AG04449 (cell line): ENCODE measurements at regions of chr6 and their contacts with region 1.

Region 1: DNA sequence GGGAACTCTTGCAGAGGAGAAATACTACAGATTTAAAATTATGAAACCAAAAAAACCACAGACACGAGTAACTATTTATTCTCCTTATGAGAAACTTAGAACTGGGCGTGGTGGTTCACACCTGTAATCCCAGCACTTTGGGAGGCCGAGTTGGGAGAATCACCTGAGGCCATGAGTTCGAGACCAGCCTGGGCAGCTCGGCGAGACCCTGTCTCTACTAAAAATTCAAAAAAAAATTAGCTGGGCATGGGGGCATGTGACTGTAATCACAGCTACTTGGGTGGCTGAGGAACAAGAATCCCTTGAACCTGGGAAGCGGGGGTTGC is 36.8 kb downstream of the SSR1 start:
- DNase-seq: no peak
- H3K4me3 ChIP-seq: no peak overlapping the region
- CTCF ChIP-seq: no peak

Region 2: DNA sequence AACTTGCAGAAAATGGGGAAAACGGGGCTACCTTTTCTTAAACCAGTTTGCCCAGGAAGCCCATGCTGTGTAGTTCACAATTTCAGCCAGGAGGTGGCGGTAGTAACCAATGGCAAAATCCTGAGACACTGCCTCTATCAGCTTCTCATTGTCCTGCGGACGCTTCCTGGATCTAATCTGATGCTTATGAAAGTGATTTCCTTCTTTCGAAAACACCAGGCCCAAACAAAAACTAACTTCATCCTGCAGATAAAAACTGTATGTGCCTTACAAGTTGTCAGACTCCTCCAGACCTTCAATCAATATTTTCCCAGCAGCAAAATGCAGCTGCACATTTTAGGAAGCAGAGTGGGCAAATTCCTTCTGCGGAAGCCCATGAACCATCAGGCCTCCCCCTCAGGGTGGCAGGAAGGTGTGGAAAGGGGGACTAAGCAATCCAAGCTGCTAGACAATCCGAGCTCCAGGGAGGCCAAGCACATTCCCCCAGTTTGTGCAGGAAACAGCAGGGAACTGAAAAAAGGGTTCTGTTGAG is 599.2 kb before region 1 on chr6:
- CTCF ChIA-PET with region 1: interaction called, 19 read pairs
- POLR2A ChIA-PET with region 1: no interaction called
- DNase-seq: no peak
- H3K4me3 ChIP-seq: no peak overlapping the region
- CTCF ChIP-seq: peak; percentile 87

Region 3: DNA sequence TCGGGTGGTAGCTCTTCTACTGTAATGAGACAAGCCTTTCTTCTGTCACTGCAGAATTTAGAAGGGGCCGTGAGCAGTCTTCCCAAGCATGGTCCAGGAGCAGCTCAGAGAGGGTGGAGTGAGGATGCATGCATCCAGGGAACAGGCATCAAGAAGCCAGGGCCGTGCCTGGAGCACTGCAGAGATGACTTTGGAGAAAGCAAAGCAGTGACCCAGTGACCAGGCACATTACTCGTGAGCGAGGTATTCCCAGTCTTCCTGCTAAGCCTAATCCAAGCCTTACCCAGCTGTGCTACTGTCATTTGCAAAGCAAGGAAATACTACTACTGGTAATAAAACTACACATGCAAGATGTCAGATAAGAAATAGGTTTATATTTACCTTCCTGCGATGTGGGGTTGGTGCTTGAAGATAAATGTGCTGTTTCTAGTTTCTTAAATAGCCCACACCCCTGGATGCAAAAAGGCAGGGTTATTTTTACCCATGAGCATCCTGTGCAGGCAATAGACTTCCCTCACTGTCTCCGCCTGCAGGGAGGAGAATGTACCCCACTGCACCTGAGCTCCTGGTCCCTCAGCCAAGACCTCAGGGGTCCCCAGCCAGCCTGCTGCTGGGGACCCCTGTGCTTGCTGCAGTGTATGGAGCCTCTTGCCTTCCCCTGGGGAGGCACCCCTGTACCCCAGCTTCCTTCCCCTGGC is 26.1 kb before region 1 on chr6:
- CTCF ChIA-PET with region 1: interaction called, 12 read pairs
- POLR2A ChIA-PET with region 1: no interaction called
- DNase-seq: no peak
- H3K4me3 ChIP-seq: no peak overlapping the region
- CTCF ChIP-seq: no peak

Region 4: GRCh38 chr6:7292596-7293255 is 16.6 kb after region 1 on chr6:
- CTCF ChIA-PET with region 1: interaction called, 122 read pairs
- POLR2A ChIA-PET with region 1: no interaction called
- DNase-seq: no peak
- H3K4me3 ChIP-seq: no peak overlapping the region
- CTCF ChIP-seq: no peak

Region 5: DNA sequence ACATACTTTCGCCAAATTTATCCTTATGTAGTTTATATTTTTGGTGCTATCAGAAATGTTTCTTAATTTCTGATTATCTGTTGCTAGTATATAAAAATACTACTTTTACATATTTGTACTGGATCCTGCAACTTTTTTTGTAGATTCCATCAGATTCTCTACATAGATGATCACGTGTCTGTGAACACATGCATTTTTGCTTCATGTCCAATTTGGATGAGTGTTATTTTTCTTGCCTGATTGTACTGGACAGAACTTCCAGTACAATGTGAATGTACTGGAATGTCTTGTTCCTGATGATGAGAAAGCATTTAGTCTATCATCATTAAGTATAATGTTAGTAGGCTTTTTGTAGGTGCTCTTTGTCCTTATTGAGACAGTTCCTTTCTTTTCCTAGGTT is 61.9 kb after region 1 on chr6:
- CTCF ChIA-PET with region 1: no interaction called
- POLR2A ChIA-PET with region 1: no interaction called
- DNase-seq: no peak
- H3K4me3 ChIP-seq: no peak overlapping the region
- CTCF ChIP-seq: no peak

Region 6: DNA sequence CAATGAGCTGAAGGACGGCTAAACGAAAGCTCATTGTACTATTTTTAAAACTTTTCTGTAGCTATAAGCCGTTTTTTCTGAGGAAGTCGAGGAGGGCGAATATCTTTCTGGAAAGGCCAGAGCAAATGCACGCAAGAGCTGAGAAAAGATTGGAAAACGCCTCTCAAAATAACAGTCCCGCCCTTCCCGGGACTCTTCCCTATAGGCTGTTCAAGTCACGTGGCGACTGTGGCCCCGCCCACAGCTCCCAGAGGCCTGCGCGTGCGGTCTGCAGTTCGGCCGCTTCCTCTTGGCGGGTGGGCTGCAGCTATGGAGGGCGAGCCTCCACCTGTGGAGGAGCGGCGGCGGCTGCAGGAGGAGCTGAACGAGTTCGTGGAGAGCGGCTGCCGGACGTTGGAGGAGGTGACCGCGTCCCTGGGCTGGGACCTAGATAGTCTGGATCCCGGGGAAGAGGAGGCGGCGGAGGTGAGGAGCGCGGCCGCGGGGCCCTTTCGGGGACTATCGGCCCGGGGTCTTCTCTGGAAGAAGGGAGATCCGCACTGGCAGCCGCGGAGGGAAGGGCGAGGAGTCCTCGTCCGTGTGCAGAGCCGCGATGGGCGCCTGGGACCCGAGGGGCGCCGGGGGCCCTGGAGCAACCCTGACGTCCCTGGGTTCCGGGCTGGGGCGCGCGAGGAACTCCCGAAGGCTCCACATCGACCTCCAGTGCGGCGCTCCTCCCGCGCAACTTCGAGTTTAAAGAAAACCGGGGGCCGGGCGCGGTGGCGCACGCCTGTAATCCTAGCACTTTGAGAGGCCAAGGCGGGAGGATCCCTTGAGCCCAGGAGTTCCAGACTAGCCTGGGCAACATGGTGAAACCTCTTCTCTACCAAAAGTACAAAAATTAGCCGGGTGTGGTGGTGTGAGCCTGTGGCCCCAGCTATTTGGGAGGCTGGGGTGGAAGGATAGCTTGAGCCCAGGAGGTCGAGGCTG is 314.1 kb after region 1 on chr6 and contains the start of gene SNRNP48:
- CTCF ChIA-PET with region 1: interaction called, 20 read pairs
- POLR2A ChIA-PET with region 1: no interaction called
- DNase-seq: peak; percentile 54
- H3K4me3 ChIP-seq: peak within 1 kb of the TSS; percentile 81
- CTCF ChIP-seq: no peak

Region 7: DNA sequence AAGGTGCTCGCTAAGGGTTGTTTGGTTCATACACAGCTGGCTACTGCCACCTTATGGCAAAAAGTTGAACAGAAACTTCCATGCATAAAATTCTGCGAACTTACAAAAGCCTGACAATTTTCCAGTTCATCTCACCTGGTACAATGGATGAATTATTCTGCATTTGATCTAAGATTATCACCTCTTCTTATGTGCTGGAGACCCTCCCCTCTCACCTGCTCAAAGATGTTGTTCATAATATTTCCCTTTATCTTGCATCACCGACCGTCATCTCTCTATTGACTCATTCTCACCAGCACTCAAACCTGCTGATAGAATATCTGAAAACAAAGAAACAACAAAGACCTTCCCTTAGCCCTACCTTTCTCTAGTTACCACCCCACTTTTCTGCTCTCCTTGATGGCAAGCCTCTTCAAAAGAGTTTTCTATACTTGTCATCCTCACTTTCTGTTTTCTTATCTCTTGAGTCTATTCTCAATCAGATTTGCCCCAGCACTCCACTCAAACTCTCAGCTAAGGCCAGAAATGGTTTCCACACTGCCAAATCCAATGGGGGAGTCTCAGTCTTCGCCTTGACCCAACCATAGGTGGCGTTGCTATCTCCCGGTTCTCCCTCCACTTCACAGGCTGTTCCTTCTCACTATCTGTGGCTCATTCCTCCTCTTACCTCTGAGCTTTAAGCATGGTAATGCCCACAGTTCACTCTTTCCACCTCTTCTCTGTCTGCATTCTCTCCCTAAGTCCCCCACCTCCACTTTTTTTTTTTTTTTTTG is 339.6 kb after region 1 on chr6:
- CTCF ChIA-PET with region 1: interaction called, 149 read pairs
- POLR2A ChIA-PET with region 1: interaction called, 4 read pairs
- DNase-seq: no peak
- H3K4me3 ChIP-seq: no peak overlapping the region
- CTCF ChIP-seq: peak; percentile 61